ENCODE measurements at regions of chr11 and their contacts with region 1.

Region 1: DNA sequence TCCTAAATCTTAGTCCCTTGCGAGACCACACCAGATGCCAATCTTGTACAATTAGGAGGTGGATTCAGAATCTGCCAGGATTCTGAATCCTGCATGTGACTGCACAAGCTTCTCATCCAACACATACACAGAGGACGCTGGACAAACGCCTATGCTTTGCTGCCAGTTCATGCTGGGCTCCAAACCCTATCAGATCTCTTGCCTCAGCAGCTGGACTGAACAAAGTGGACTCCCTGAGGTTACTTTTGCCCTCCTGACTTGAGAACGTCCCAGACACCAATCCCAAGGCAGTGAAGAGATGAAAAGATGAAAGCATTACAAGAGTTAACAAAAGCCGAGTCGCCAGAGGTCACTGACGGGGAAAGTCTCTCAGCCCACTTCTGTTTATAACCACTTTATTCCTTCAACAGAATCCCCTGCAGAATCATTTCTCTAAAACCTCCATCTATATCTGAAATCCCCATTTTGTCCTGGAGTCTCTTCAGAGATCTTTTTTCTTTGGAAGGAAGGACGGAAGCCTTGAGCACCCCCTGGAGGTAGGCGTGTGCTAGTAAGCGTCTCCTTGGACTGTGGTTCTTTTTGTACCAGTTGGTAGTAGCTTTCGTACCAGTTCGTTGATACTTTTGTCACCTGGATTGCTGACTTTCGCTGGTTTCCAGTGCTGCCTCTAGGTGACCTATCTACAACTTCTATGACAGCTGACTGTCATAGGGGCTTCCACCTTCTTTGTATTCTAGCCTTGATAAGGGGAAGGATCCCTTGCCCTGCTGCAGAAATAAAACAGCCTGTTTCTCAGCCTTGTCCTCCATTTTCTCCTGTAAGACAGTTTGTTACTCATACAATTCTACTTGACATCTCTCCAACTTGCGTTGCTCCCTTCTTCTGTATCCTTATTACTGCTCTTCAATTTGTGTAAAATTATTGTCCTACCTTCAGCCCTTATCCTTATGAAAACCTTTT is 26.1 kb upstream of the EED start:
- DNase-seq: peak; percentile 51 to 63 (median 55)
- H3K4me3 ChIP-seq: peak overlapping the region in 1 of 2 donors; percentile 3
- H3K4me3 Mint-ChIP-seq: peak overlapping the region; percentile 65 to 89 (median 75)
- H3K27ac ChIP-seq: no peak overlapping the region
- H3K27ac Mint-ChIP-seq: peak overlapping the region in 3 of 7 donors; percentile 24 to 72 (median 31)
- H3K4me1 ChIP-seq: peaks cover 4% of the 10 kb centered on the region
- H3K4me1 Mint-ChIP-seq: peaks cover 10 to 18% (median 11%) of the 10 kb centered on the region in 4 donors
- H3K27me3 ChIP-seq: no peaks in the 10 kb centered on the region
- H3K27me3 Mint-ChIP-seq: peaks cover 7 to 9% of the 10 kb centered on the region in 2 donors

Region 2: DNA sequence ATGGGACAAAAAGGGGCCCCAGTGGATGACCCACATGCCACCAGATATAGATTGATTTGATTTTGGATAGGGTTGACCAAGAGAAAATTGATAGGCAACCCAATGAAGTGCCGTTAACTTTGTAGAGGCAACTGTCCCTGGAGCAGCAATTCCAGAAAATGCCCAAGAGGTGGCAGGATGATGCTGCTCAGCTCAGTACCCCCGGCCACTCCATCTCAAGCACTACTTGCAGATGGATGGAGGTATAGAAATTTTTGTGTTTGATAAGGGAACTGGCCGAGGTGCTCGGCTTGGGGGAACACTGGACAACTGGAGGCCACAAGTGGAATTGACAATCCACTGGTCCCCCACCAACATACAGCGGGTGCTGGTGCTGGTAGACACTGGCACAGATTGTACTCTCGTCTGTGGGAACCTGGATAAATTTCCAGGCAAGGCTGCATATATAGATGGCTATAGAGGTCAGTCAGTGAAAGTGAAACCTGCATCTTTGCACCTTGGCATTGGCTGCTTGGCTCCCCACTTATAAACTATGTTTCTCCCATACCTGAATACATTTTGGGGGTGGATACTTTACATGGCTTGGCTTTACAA is 276.9 kb before region 1 on chr11:
- CTCF ChIA-PET with region 1: interaction called, 3 read pairs
- POLR2A ChIA-PET with region 1: no interaction called
- intact Hi-C with region 1: loop called (anchors 5 kb)
- DNase-seq: no peak
- H3K4me3 ChIP-seq: no peak overlapping the region
- H3K4me3 Mint-ChIP-seq: no peak overlapping the region
- H3K27ac ChIP-seq: no peak overlapping the region
- H3K27ac Mint-ChIP-seq: peak overlapping the region in 1 of 7 donors; percentile 75
- H3K4me1 ChIP-seq: no peaks in the 10 kb centered on the region
- H3K4me1 Mint-ChIP-seq: peaks cover 0 to 7% (median 3%) of the 10 kb centered on the region in 4 donors
- H3K27me3 ChIP-seq: no peaks in the 10 kb centered on the region
- H3K27me3 Mint-ChIP-seq: no peaks in the 10 kb centered on the region

Region 3: DNA sequence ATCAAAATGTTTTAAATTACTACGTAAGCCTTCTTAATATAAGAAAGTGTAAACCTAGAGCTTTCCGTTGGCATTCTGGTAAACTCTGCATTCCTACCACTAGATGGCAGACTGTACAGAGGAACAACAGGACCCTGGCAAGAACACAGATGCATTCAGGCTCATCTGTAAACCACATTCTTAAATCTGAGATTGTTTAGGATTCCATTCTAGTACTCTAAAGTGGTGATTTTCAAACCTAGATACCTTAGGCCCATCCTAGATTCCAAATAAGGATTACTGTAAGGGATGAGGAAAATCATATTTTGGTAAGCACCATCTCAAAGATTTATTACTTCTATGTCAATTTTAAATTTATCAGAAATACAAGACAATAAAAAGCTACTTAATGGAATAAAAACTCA is 176.4 kb before region 1 on chr11:
- CTCF ChIA-PET with region 1: interaction called, 30 read pairs
- POLR2A ChIA-PET with region 1: interaction called, 3 read pairs
- intact Hi-C with region 1: loop called (anchors 1 kb)
- DNase-seq: peak; percentile 72 to 76 (median 74)
- H3K4me3 ChIP-seq: no peak overlapping the region
- H3K4me3 Mint-ChIP-seq: peak overlapping the region in 4 of 8 donors; percentile 0 to 35 (median 4)
- H3K27ac ChIP-seq: no peak overlapping the region
- H3K27ac Mint-ChIP-seq: peak overlapping the region; percentile 20 to 84 (median 64)
- H3K4me1 ChIP-seq: peaks cover 58% of the 10 kb centered on the region
- H3K4me1 Mint-ChIP-seq: peaks cover 49 to 73% (median 62%) of the 10 kb centered on the region in 4 donors
- H3K27me3 ChIP-seq: no peaks in the 10 kb centered on the region
- H3K27me3 Mint-ChIP-seq: no peaks in the 10 kb centered on the region

Region 4: DNA sequence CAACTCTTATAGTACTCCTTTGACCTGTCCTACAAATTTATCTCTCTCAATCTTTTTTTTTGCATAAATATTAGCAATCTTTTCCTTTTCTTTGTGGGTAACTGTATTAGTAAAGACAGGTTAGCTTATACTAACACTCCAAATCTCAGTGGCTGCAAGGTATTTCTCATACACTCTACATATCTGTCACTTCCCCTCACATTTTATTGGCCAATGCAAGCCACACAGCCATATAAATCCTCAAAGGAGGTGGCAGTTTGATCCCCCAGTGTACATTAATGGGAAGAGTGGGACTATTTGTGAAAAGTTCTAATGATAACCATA is 16.4 kb before region 1 on chr11:
- CTCF ChIA-PET with region 1: interaction called, 28 read pairs
- POLR2A ChIA-PET with region 1: no interaction called
- intact Hi-C with region 1: loop called (anchors 2 kb)
- DNase-seq: peak in 1 of 5 donors; percentile 8
- H3K4me3 ChIP-seq: peak overlapping the region; percentile 44 to 55
- H3K4me3 Mint-ChIP-seq: no peak overlapping the region
- H3K27ac ChIP-seq: peak overlapping the region; percentile 52
- H3K27ac Mint-ChIP-seq: no peak overlapping the region
- H3K4me1 ChIP-seq: peaks cover 15% of the 10 kb centered on the region
- H3K4me1 Mint-ChIP-seq: no peaks in the 10 kb centered on the region
- H3K27me3 ChIP-seq: no peaks in the 10 kb centered on the region
- H3K27me3 Mint-ChIP-seq: no peaks in the 10 kb centered on the region

Region 5: GRCh38 chr11:86230921-86231430 is 12.6 kb after region 1 on chr11:
- CTCF ChIA-PET with region 1: interaction called, 14 read pairs
- POLR2A ChIA-PET with region 1: no interaction called
- intact Hi-C with region 1: no loop called
- DNase-seq: no peak
- H3K4me3 ChIP-seq: no peak overlapping the region
- H3K4me3 Mint-ChIP-seq: no peak overlapping the region
- H3K27ac ChIP-seq: no peak overlapping the region
- H3K27ac Mint-ChIP-seq: no peak overlapping the region
- H3K4me1 ChIP-seq: no peaks in the 10 kb centered on the region
- H3K4me1 Mint-ChIP-seq: peaks cover 0 to 4% (median 0%) of the 10 kb centered on the region in 4 donors
- H3K27me3 ChIP-seq: no peaks in the 10 kb centered on the region
- H3K27me3 Mint-ChIP-seq: no peaks in the 10 kb centered on the region

Region 6: GRCh38 chr11:86244522-86245368 is 26.3 kb after region 1 on chr11 and contains the start of gene EED:
- CTCF ChIA-PET with region 1: interaction called, 3 read pairs
- POLR2A ChIA-PET with region 1: interaction called, 3 read pairs
- intact Hi-C with region 1: loop called (anchors 1 kb)
- DNase-seq: peak; percentile 92 to 96 (median 93)
- H3K4me3 ChIP-seq: peak within 1 kb of the TSS; percentile 98 to 99
- H3K4me3 Mint-ChIP-seq: no peak within 1 kb of the TSS
- H3K27ac ChIP-seq: peak within 1 kb of the TSS; percentile 99
- H3K27ac Mint-ChIP-seq: no peak within 1 kb of the TSS
- H3K4me1 ChIP-seq: peaks cover 54% of the 10 kb centered on the region
- H3K4me1 Mint-ChIP-seq: peaks cover 0 to 35% (median 13%) of the 10 kb centered on the region in 4 donors
- H3K27me3 ChIP-seq: no peaks in the 10 kb centered on the region
- H3K27me3 Mint-ChIP-seq: peaks cover 0 to 2% of the 10 kb centered on the region in 2 donors
- total RNA-seq, gene EED: 47.1 to 51.0 TPM

Measured in CD4-positive, alpha-beta memory T cell (primary cell).